Calu3 (cell line): ENCODE measurements at regions of chr5 and their contacts with region 1.

Region 1: GRCh38 chr5:74640450-74640953 is at the start of gene ENC1:
- DNase-seq: peak; percentile 94
- H3K4me3 Mint-ChIP-seq: peak within 1 kb of the TSS; percentile 92
- H3K27ac Mint-ChIP-seq: peak within 1 kb of the TSS; percentile 64
- H3K4me1 Mint-ChIP-seq: peaks cover 54% of the 10 kb centered on the region
- H3K27me3 Mint-ChIP-seq: no peaks in the 10 kb centered on the region
- CTCF ChIP-seq: peak; percentile 62
- total RNA-seq, gene ENC1: 91.6 and 100 TPM in 2 replicates

Region 2: DNA sequence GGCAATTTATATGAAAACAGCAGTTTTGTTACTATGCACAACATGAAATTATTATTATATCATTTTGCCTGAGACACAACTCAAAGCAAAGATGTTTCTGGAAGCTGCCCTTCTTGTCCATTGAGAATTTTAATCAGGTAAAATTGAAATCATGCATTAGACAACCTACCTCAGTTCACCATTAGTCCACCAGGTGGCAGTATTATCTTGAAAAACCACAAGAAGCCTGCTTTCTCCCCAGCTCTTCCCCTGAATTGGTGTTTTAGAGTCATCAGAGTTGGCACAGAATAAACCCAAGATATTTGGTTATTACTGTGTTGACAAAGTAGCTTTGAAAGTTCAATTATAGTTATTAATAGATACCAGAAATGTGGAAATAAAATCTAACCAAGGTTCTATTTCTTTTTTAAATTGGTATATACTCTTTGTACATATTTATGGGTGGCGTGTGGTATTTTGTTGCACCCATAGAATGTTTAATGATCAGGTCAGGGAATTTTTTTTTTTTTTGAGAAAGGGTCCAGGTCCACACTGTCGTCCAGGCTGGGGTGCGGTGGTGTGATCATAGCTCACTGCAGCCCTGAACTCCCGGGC is 1049.3 kb before region 1 on chr5:
- CTCF ChIA-PET with region 1: no interaction called
- intact Hi-C with region 1: loop called (anchors 10 kb)
- DNase-seq: peak; percentile 82
- H3K4me3 Mint-ChIP-seq: no peak overlapping the region
- H3K27ac Mint-ChIP-seq: no peak overlapping the region
- H3K4me1 Mint-ChIP-seq: peaks cover 23% of the 10 kb centered on the region
- H3K27me3 Mint-ChIP-seq: no peaks in the 10 kb centered on the region
- CTCF ChIP-seq: peak; percentile 84

Region 3: DNA sequence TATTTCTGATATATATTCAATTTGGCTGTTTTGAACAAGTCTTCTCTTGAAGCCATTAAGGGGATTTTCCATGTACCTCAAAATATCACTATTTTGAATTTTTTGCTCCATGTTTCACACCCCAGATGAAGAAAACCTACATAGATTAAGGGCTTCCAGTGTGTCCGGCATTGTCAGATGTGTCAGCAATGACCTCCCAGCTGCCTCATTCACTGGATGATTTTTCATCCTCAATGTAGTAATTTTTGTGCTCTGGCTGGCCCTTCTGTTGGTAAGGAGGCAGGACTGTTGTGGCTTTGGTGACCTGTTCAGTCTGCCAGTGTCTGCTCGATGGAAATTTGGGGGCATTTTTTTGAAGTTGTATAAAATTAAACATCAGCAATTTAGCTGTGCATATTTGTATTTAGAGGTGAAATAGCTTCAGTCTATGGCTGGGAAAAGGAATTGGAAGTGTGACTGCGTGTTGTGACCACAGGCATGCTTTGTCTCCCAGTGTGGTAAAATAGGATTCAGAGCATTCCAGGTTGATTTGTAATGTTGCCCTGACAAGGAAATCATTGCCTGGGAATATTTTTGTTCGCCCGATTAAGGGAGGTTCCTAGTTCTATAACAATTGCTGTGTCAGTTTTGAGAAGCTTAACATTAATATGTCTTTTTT is 702.1 kb before region 1 on chr5:
- CTCF ChIA-PET with region 1: interaction called, 3 read pairs
- intact Hi-C with region 1: loop called (anchors 10 kb)
- DNase-seq: peak; percentile 67
- H3K4me3 Mint-ChIP-seq: peak overlapping the region; percentile 41
- H3K27ac Mint-ChIP-seq: peak overlapping the region; percentile 91
- H3K4me1 Mint-ChIP-seq: peaks cover 76% of the 10 kb centered on the region
- H3K27me3 Mint-ChIP-seq: no peaks in the 10 kb centered on the region
- CTCF ChIP-seq: no peak

Region 4: GRCh38 chr5:74127381-74128320 is 512.9 kb before region 1 on chr5:
- CTCF ChIA-PET with region 1: no interaction called
- intact Hi-C with region 1: loop called (anchors 10 kb)
- DNase-seq: peak; percentile 52
- H3K4me3 Mint-ChIP-seq: peak overlapping the region; percentile 54
- H3K27ac Mint-ChIP-seq: peak overlapping the region; percentile 23
- H3K4me1 Mint-ChIP-seq: peaks cover 28% of the 10 kb centered on the region
- H3K27me3 Mint-ChIP-seq: no peaks in the 10 kb centered on the region
- CTCF ChIP-seq: peak; percentile 26

Region 5: GRCh38 chr5:74326571-74327338 is 313.7 kb before region 1 on chr5:
- CTCF ChIA-PET with region 1: no interaction called
- intact Hi-C with region 1: loop called (anchors 5 kb)
- DNase-seq: peak; percentile 83
- H3K4me3 Mint-ChIP-seq: no peak overlapping the region
- H3K27ac Mint-ChIP-seq: peak overlapping the region; percentile 63
- H3K4me1 Mint-ChIP-seq: peaks cover 44% of the 10 kb centered on the region
- H3K27me3 Mint-ChIP-seq: no peaks in the 10 kb centered on the region
- CTCF ChIP-seq: no peak

Region 6: GRCh38 chr5:74500110-74500917 is 140.2 kb before region 1 on chr5:
- CTCF ChIA-PET with region 1: interaction called, 3 read pairs
- intact Hi-C with region 1: loop called (anchors 2 kb)
- DNase-seq: peak; percentile 21
- H3K4me3 Mint-ChIP-seq: no peak overlapping the region
- H3K27ac Mint-ChIP-seq: peak overlapping the region; percentile 63
- H3K4me1 Mint-ChIP-seq: peaks cover 55% of the 10 kb centered on the region
- H3K27me3 Mint-ChIP-seq: no peaks in the 10 kb centered on the region
- CTCF ChIP-seq: no peak

Region 7: GRCh38 chr5:74717596-74717995 is 77.1 kb after region 1 on chr5:
- CTCF ChIA-PET with region 1: no interaction called
- intact Hi-C with region 1: no loop called
- DNase-seq: no peak
- H3K4me3 Mint-ChIP-seq: no peak overlapping the region
- H3K27ac Mint-ChIP-seq: no peak overlapping the region
- H3K4me1 Mint-ChIP-seq: no peaks in the 10 kb centered on the region
- H3K27me3 Mint-ChIP-seq: no peaks in the 10 kb centered on the region
- CTCF ChIP-seq: no peak